ENCODE measurements at regions of chr6 and their contacts with region 1.

Region 1: GRCh38 chr6:41424370-41425058 is 89.1 kb downstream of the NCR2 start:
- DNase-seq: peak; percentile 90
- H3K4me3 ChIP-seq: no peak overlapping the region
- H3K27ac ChIP-seq: peak overlapping the region in 1 of 4 donors; percentile 9
- H3K4me1 ChIP-seq: peaks cover 0 to 38% (median 29%) of the 10 kb centered on the region in 4 donors
- H3K27me3 ChIP-seq: no peaks in the 10 kb centered on the region
- CTCF ChIP-seq: peak; percentile 65 to 93 (median 88)
- EP300 ChIP-seq: no peak
- POLR2A ChIP-seq: no peak

Region 2: DNA sequence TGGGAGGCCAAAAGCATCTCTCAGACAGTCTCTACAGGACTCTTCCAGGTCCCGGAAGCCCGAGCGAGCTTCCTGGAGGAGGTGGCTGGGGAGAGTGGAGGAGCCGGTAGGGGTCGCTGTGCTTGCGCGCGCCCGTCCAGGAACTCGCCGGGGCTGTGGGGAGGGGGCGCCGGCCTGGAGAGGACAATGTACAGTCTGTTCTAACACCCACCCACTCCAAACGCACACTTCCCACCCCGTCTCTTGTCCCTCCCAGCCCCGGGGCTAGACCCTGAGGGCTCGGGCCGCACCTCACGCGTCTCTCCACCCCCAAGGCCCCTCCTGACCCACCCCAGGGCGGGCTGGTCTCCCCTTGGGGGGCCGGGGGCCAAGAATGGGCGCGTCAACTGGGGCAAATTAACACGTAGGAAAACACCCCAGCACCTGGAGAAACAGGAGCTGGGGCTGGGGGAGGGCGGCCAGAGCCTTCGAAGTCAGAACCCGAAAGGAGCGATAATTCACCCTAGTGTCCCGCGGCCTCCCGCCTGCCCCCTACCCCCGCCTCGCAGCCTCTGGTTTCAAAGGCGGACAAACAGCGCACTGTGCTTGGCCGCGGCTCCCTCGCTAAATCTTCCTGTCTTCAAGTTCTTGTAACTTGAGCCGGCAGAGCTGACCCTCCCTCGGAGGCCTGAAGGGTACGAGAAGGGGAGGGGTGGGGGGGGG is 18.4 kb after region 1 on chr6:
- intact Hi-C with region 1: loop called (anchors 2 kb)
- DNase-seq: peak; percentile 90
- H3K4me3 ChIP-seq: peak overlapping the region in 3 of 4 donors; percentile 30 to 35 (median 35)
- H3K27ac ChIP-seq: peak overlapping the region; percentile 68 to 88 (median 78)
- H3K4me1 ChIP-seq: peaks cover 0 to 41% (median 35%) of the 10 kb centered on the region in 4 donors
- H3K27me3 ChIP-seq: no peaks in the 10 kb centered on the region
- CTCF ChIP-seq: peak in 2 of 4 experiments; percentile 25 to 40
- EP300 ChIP-seq: no peak
- POLR2A ChIP-seq: no peak

Region 3: GRCh38 chr6:41505122-41506049 is 80.9 kb after region 1 on chr6:
- intact Hi-C with region 1: loop called (anchors 1 kb)
- DNase-seq: peak; percentile 95
- H3K4me3 ChIP-seq: peak overlapping the region; percentile 14 to 49 (median 38)
- H3K27ac ChIP-seq: peak overlapping the region; percentile 73 to 91 (median 76)
- H3K4me1 ChIP-seq: peaks cover 0 to 51% (median 33%) of the 10 kb centered on the region in 4 donors
- H3K27me3 ChIP-seq: no peaks in the 10 kb centered on the region
- CTCF ChIP-seq: no peak
- EP300 ChIP-seq: no peak
- POLR2A ChIP-seq: no peak

Region 4: GRCh38 chr6:41591859-41592502 is 167.5 kb after region 1 on chr6:
- intact Hi-C with region 1: loop called (anchors 1 kb)
- DNase-seq: peak; percentile 86
- H3K4me3 ChIP-seq: no peak overlapping the region
- H3K27ac ChIP-seq: no peak overlapping the region
- H3K4me1 ChIP-seq: no peaks in the 10 kb centered on the region
- H3K27me3 ChIP-seq: no peaks in the 10 kb centered on the region
- CTCF ChIP-seq: peak; percentile 90 to 95 (median 92)
- EP300 ChIP-seq: no peak
- POLR2A ChIP-seq: no peak